ENCODE measurements at regions of chr1 and their contacts with region 1.

Region 1: GRCh38 chr1:183635606-183636333 is at the start of gene ARPC5:
- DNase-seq: peak; percentile 96
- H3K4me3 Mint-ChIP-seq: peak within 1 kb of the TSS; percentile 100
- H3K27ac Mint-ChIP-seq: peak within 1 kb of the TSS; percentile 100
- H3K4me1 Mint-ChIP-seq: peaks cover 46% of the 10 kb centered on the region
- H3K27me3 Mint-ChIP-seq: peaks cover 4% of the 10 kb centered on the region
- total RNA-seq, gene ARPC5: 146 and 154 TPM in 2 replicates

Region 2: DNA sequence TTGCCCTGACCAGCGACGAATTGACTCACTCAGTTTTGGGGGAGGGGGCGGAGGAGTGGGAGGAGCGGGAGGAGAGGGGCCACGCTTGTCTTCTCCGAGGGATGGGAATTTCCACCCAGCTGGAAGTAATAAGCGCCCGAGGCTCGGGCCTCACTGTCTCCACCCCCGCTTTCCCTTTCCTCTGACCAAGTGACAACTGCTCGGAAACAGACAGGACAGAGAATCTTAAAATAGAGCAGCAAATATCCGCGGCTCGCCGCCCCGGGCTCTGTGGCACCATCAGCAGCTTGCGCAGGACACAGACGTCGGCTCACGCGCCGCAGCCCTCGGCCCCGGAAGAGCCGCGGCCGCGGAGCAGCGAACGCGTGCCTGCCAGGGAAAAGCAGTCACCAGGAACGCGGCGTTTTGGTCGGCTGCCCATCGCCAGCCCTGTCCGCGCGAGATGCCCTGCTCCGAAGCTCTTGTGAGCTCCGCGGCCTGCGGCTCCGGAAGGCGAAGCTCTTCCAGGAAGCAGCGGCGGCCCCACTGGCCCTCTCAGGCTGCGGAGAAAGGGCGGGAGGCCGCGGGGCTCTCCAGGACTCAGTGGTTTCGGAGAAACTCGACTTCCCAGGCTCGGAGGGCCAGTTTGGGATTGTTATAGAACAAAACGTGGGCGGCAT is 1020.8 kb before region 1 on chr1:
- intact Hi-C with region 1: loop called (anchors 10 kb)
- DNase-seq: peak; percentile 34
- H3K4me3 Mint-ChIP-seq: peak overlapping the region; percentile 81
- H3K27ac Mint-ChIP-seq: peak overlapping the region; percentile 88
- H3K4me1 Mint-ChIP-seq: peaks cover 89% of the 10 kb centered on the region
- H3K27me3 Mint-ChIP-seq: peaks cover 16% of the 10 kb centered on the region

Region 3: DNA sequence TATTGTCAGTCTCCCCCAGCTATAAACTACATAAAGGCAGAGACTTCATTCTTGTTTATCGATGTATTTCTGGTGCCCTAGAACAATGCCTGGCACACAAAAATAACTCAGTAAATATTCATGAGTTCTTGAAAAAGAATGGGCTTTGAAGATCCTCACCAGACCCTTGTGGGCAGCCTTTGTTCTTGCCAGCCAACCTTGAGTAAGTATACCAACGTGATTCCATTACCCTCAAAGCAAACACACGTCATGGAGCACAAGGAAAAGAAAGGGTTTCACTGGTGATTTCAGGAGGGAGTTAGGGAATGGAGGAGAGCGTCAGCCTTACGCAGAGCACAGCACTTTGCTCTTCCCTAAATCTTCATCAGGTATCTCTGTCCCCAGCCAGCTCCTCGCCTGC is 247.0 kb before region 1 on chr1:
- intact Hi-C with region 1: no loop called
- DNase-seq: no peak
- H3K4me3 Mint-ChIP-seq: no peak overlapping the region
- H3K27ac Mint-ChIP-seq: no peak overlapping the region
- H3K4me1 Mint-ChIP-seq: no peaks in the 10 kb centered on the region
- H3K27me3 Mint-ChIP-seq: peaks cover 9% of the 10 kb centered on the region

Region 4: GRCh38 chr1:183590244-183591191 is 45.3 kb before region 1 on chr1 and contains the start of gene NCF2:
- intact Hi-C with region 1: loop called (anchors 1 kb)
- DNase-seq: peak; percentile 68
- H3K4me3 Mint-ChIP-seq: peak within 1 kb of the TSS; percentile 69
- H3K27ac Mint-ChIP-seq: peak within 1 kb of the TSS; percentile 84
- H3K4me1 Mint-ChIP-seq: peaks cover 50% of the 10 kb centered on the region
- H3K27me3 Mint-ChIP-seq: peaks cover 2% of the 10 kb centered on the region
- total RNA-seq, gene NCF2: 4.8 and 5.9 TPM in 2 replicates

Region 5: GRCh38 chr1:183711741-183712361 is 76.1 kb after region 1 on chr1:
- intact Hi-C with region 1: no loop called
- DNase-seq: no peak
- H3K4me3 Mint-ChIP-seq: no peak overlapping the region
- H3K27ac Mint-ChIP-seq: no peak overlapping the region
- H3K4me1 Mint-ChIP-seq: no peaks in the 10 kb centered on the region
- H3K27me3 Mint-ChIP-seq: no peaks in the 10 kb centered on the region

Region 6: GRCh38 chr1:183915625-183916510 is 280.1 kb after region 1 on chr1:
- intact Hi-C with region 1: loop called (anchors 1 kb)
- DNase-seq: peak; percentile 69
- H3K4me3 Mint-ChIP-seq: no peak overlapping the region
- H3K27ac Mint-ChIP-seq: peak overlapping the region; percentile 33
- H3K4me1 Mint-ChIP-seq: peaks cover 21% of the 10 kb centered on the region
- H3K27me3 Mint-ChIP-seq: no peaks in the 10 kb centered on the region

Region 7: GRCh38 chr1:185044981-185045813 is 1409.4 kb after region 1 on chr1 and contains the start of gene RNF2:
- intact Hi-C with region 1: loop called (anchors 10 kb)
- DNase-seq: peak; percentile 65
- H3K4me3 Mint-ChIP-seq: peak within 1 kb of the TSS; percentile 89
- H3K27ac Mint-ChIP-seq: peak within 1 kb of the TSS; percentile 82
- H3K4me1 Mint-ChIP-seq: peaks cover 29% of the 10 kb centered on the region
- H3K27me3 Mint-ChIP-seq: peaks cover 15% of the 10 kb centered on the region
- total RNA-seq, gene RNF2: 24.1 and 24.4 TPM in 2 replicates

Measured in activated T-helper 1 cell treated with anti-CD3 and anti-CD28 coated beads, Interleukin-12 subunit alpha, Interleukin-12 subunit beta, Interleukin-2, Interleukin-4 antibody, amounts not matched to agents 30 ng/mL and 10 ng/mL and 1 ng/mL, durations not matched to agents 14 hours and 24 hours and 36 hours (primary cell).